Mammary epithelial cell (primary cell): ENCODE measurements at regions of chr15 and their contacts with region 1.

Region 1: GRCh38 chr15:36438499-36438898 is 140.9 kb upstream of the CDIN1 start:
- DNase-seq: no peak
- H3K4me3 ChIP-seq: no peak overlapping the region
- H3K27ac ChIP-seq: no peak overlapping the region
- H3K4me1 ChIP-seq: no peaks in the 10 kb centered on the region
- H3K27me3 ChIP-seq: no peaks in the 10 kb centered on the region
- CTCF ChIP-seq: no peak

Region 2: GRCh38 chr15:36479200-36479896 is 40.8 kb after region 1 on chr15:
- CTCF ChIA-PET with region 1: no interaction called
- dilution Hi-C with region 1: loop called (anchors 5 kb)
- in situ Hi-C with region 1: no loop called
- intact Hi-C with region 1: no loop called
- DNase-seq: no peak
- H3K4me3 ChIP-seq: no peak overlapping the region
- H3K27ac ChIP-seq: no peak overlapping the region
- H3K4me1 ChIP-seq: no peaks in the 10 kb centered on the region
- H3K27me3 ChIP-seq: no peaks in the 10 kb centered on the region
- CTCF ChIP-seq: no peak